GM12878 (cell line): ENCODE measurements at regions of chr6 and their contacts with region 1.

Region 1: GRCh38 chr6:89371849-89372505 is 19.5 kb upstream of the UBE2J1 start:
- DNase-seq: no peak
- ATAC-seq: peak; percentile 89
- H3K4me3 ChIP-seq: no peak overlapping the region
- H3K27ac ChIP-seq: peak overlapping the region; percentile 52
- H3K4me1 ChIP-seq: peaks cover 28% of the 10 kb centered on the region
- H3K27me3 ChIP-seq: no peaks in the 10 kb centered on the region
- CTCF ChIP-seq: peak; percentile 97 to 99 (median 99)
- EP300 ChIP-seq: no peak
- POLR2A ChIP-seq: no peak
- RAD21 ChIP-seq: peak; percentile 85

Region 2: GRCh38 chr6:89080542-89081422 is 291.2 kb before region 1 on chr6 and contains the start of gene PNRC1:
- CTCF ChIA-PET with region 1: interaction called, 10 read pairs
- POLR2A ChIA-PET with region 1: interaction called, 4 read pairs
- RAD21 ChIA-PET with region 1: no interaction called
- SMC1A ChIA-PET with region 1: interaction called, 7 read pairs
- in situ Hi-C with region 1: no loop called
- intact Hi-C with region 1: no loop called
- DNase-seq: peak; percentile 96
- ATAC-seq: peak; percentile 85
- H3K4me3 ChIP-seq: peak within 1 kb of the TSS; percentile 93
- H3K27ac ChIP-seq: peak within 1 kb of the TSS; percentile 99
- H3K4me1 ChIP-seq: no peaks in the 10 kb centered on the region
- H3K27me3 ChIP-seq: no peaks in the 10 kb centered on the region
- CTCF ChIP-seq: no peak
- EP300 ChIP-seq: no peak; a peak in 1 of 4 replicates
- POLR2A ChIP-seq: peak; percentile 100
- RAD21 ChIP-seq: no peak
- polyA plus RNA-seq, gene PNRC1: 7.6 to 9.5 TPM

Region 3: DNA sequence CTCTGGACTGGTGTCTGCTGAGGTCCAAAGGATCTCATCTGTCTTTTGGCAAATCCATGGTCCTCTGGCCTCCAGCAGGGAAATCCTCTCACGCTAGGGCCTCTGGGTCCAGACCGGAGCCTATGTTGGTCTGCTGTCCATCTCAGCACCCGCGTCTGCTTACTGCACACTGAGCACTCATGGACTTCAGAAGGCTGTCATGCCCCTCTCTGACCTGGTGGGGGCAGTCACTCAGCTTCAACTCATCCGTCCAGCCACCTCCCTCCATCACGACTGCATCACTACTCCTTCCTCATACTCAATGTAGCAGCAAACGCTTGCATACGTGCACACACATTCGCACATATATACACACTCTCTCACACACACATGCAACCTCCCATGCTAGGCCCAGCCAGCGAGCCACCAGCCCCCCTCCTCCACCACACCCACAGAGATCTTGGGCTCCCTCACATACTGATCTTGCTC is 90.2 kb before region 1 on chr6:
- CTCF ChIA-PET with region 1: interaction called, 29 read pairs
- POLR2A ChIA-PET with region 1: no interaction called
- RAD21 ChIA-PET with region 1: interaction called, 8 read pairs
- SMC1A ChIA-PET with region 1: interaction called, 15 read pairs
- in situ Hi-C with region 1: no loop called
- intact Hi-C with region 1: loop called (anchors 1 kb)
- DNase-seq: no peak
- ATAC-seq: peak; percentile 99
- H3K4me3 ChIP-seq: no peak overlapping the region
- H3K27ac ChIP-seq: no peak overlapping the region
- H3K4me1 ChIP-seq: peaks cover 7% of the 10 kb centered on the region
- H3K27me3 ChIP-seq: no peaks in the 10 kb centered on the region
- CTCF ChIP-seq: peak; percentile 60 to 86 (median 79)
- EP300 ChIP-seq: no peak
- POLR2A ChIP-seq: no peak
- RAD21 ChIP-seq: peak; percentile 77

Region 4: DNA sequence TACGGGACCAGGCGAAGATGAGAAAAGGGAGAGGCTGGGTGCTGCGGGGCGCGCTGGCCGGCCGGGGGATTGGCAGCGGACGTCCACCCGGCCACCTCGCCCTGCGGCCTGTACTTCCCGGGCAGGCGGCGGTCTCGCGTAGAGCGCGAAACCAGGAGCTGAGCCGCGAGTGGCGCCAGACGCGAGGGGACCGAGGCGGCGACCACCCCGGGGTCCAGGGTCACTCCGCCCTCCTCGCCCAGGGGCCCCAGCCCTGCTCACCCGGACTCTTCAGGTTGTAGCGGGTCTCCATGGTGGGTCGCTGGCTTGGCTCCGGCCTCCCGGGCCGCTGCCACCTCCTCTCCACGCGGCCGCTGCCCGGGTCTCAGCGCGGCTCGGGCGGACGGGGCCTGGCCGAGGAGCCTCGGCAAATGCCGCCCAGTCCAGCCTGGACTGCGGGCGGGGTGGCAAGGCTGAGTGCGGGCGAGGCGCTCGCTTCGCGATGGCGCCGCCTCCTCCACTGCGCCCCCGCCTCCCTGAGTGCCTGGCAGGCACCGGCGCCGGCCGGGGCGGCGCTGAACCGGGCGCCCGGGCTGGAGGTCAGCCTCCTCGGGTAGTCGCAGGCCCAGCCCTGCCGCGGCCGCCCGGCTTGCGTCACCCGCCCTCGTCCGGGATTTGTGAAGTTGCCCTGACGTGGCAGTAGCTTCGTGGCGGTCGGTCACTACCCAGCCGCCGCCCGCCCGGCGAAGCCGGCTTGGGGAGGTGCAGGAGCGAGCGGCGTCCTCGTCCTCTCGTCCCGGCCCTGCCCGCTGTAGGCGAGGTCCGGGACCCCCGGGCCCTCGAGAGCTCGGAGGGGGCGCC is 19.5 kb before region 1 on chr6 and contains the start of gene UBE2J1:
- CTCF ChIA-PET with region 1: interaction called, 260 read pairs
- POLR2A ChIA-PET with region 1: interaction called, 30 read pairs
- RAD21 ChIA-PET with region 1: interaction called, 187 read pairs
- SMC1A ChIA-PET with region 1: interaction called, 252 read pairs
- in situ Hi-C with region 1: no loop called
- intact Hi-C with region 1: no loop called
- DNase-seq: no peak
- ATAC-seq: peak; percentile 79
- H3K4me3 ChIP-seq: peak within 1 kb of the TSS; percentile 98
- H3K27ac ChIP-seq: peak within 1 kb of the TSS; percentile 97
- H3K4me1 ChIP-seq: peaks cover 50% of the 10 kb centered on the region
- H3K27me3 ChIP-seq: no peaks in the 10 kb centered on the region
- CTCF ChIP-seq: no peak
- EP300 ChIP-seq: peak in 1 of 2 experiments; percentile 23; a peak in 1 of 4 replicates
- POLR2A ChIP-seq: peak; percentile 95
- RAD21 ChIP-seq: no peak
- polyA plus RNA-seq, gene UBE2J1: 48.7 to 69.1 TPM

Region 5: DNA sequence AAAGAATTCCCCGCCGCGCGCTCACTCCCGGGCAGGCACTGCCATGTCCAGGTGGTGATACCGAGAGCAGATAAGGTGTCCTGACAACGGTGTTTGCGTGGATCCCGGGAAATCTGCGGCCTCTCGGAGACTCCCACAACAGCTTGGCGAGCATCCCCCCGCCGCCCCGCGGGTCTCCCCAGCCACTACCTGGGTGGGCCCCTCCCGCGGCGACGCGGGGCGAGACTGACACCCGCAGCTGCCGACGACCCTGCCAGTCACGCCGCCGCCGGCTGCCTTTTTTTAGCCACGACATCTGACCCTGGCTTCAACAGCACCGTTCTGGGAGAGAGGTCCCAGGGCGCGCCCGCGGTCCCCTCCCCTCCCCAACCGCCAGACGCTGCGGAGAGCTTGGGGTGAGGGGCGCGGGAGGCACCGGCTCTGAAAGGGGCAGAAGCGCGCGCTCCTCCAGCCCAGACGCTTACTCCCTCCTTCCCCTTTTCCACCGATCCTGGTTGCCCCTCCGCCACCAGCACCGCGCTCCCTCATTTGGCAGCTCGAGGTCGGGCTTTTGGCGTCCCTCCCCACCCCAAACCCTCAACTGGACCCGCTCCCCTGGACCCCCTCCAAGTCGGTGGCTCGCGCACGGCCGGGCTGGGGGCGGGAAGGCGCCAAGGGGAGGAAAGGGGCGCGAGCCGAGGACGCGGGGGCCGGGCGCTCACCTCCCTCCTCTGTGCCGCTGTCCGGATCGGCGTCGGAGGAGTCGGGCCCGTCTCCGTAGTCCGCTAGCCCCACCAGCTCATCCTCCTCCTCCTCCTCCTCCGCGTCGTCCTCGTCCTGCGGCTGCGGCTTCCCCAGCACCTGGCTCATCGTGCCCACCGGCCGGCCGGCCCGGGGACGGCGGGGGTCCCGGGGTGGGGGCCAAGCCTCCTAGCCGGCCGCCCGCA is 39.4 kb after region 1 on chr6:
- CTCF ChIA-PET with region 1: interaction called, 20 read pairs
- POLR2A ChIA-PET with region 1: no interaction called
- RAD21 ChIA-PET with region 1: interaction called, 7 read pairs
- SMC1A ChIA-PET with region 1: interaction called, 10 read pairs
- in situ Hi-C with region 1: no loop called
- intact Hi-C with region 1: loop called (anchors 2 kb)
- DNase-seq: no peak
- ATAC-seq: peak; percentile 75
- H3K4me3 ChIP-seq: peak overlapping the region; percentile 82
- H3K27ac ChIP-seq: peak overlapping the region; percentile 54
- H3K4me1 ChIP-seq: peaks cover 3% of the 10 kb centered on the region; the same call in 1 of the 2 replicates
- H3K27me3 ChIP-seq: no peaks in the 10 kb centered on the region; a peak in 1 of 4 replicates
- CTCF ChIP-seq: no peak
- EP300 ChIP-seq: no peak
- POLR2A ChIP-seq: 0 out of 2 replicates have a peak, but pooled peaks have one; percentile 40
- RAD21 ChIP-seq: no peak

Region 6: GRCh38 chr6:89462503-89462902 is 90.5 kb after region 1 on chr6:
- CTCF ChIA-PET with region 1: no interaction called
- POLR2A ChIA-PET with region 1: no interaction called
- RAD21 ChIA-PET with region 1: no interaction called
- SMC1A ChIA-PET with region 1: no interaction called
- in situ Hi-C with region 1: no loop called
- intact Hi-C with region 1: no loop called
- DNase-seq: no peak
- ATAC-seq: no peak
- H3K4me3 ChIP-seq: no peak overlapping the region
- H3K27ac ChIP-seq: no peak overlapping the region
- H3K4me1 ChIP-seq: no peaks in the 10 kb centered on the region
- H3K27me3 ChIP-seq: no peaks in the 10 kb centered on the region
- CTCF ChIP-seq: no peak
- EP300 ChIP-seq: no peak
- POLR2A ChIP-seq: no peak
- RAD21 ChIP-seq: no peak

Region 7: GRCh38 chr6:89542081-89542857 is 170.3 kb after region 1 on chr6:
- CTCF ChIA-PET with region 1: no interaction called
- POLR2A ChIA-PET with region 1: no interaction called
- RAD21 ChIA-PET with region 1: no interaction called
- SMC1A ChIA-PET with region 1: no interaction called
- in situ Hi-C with region 1: no loop called
- intact Hi-C with region 1: no loop called
- DNase-seq: no peak
- ATAC-seq: peak; percentile 76
- H3K4me3 ChIP-seq: no peak overlapping the region
- H3K27ac ChIP-seq: no peak overlapping the region
- H3K4me1 ChIP-seq: no peaks in the 10 kb centered on the region
- H3K27me3 ChIP-seq: no peaks in the 10 kb centered on the region
- CTCF ChIP-seq: no peak
- EP300 ChIP-seq: no peak
- POLR2A ChIP-seq: no peak
- RAD21 ChIP-seq: no peak

Region 8: GRCh38 chr6:89597988-89598692 is 226.2 kb after region 1 on chr6:
- CTCF ChIA-PET with region 1: interaction called, 24 read pairs
- POLR2A ChIA-PET with region 1: no interaction called
- RAD21 ChIA-PET with region 1: interaction called, 6 read pairs
- SMC1A ChIA-PET with region 1: interaction called, 5 read pairs
- in situ Hi-C with region 1: no loop called
- intact Hi-C with region 1: loop called (anchors 5 kb)
- DNase-seq: no peak
- ATAC-seq: peak; percentile 20; the same call in 1 of the 3 replicates
- H3K4me3 ChIP-seq: no peak overlapping the region
- H3K27ac ChIP-seq: no peak overlapping the region
- H3K4me1 ChIP-seq: peaks cover 17% of the 10 kb centered on the region
- H3K27me3 ChIP-seq: no peaks in the 10 kb centered on the region
- CTCF ChIP-seq: peak; percentile 12 to 34 (median 14); a peak in 3 of 6 replicates
- EP300 ChIP-seq: no peak
- POLR2A ChIP-seq: no peak
- RAD21 ChIP-seq: peak; percentile 44

Region 9: GRCh38 chr6:90478789-90479602 is 1107.0 kb after region 1 on chr6:
- CTCF ChIA-PET with region 1: interaction called, 6 read pairs
- POLR2A ChIA-PET with region 1: no interaction called
- RAD21 ChIA-PET with region 1: interaction called, 4 read pairs
- SMC1A ChIA-PET with region 1: interaction called, 3 read pairs
- in situ Hi-C with region 1: no loop called
- intact Hi-C with region 1: loop called (anchors 10 kb)
- DNase-seq: peak; percentile 41
- ATAC-seq: peak; percentile 96
- H3K4me3 ChIP-seq: 0 out of 2 replicates have a peak overlapping the region, but pooled peaks have one; percentile 15
- H3K27ac ChIP-seq: no peak overlapping the region
- H3K4me1 ChIP-seq: peaks cover 4% of the 10 kb centered on the region
- H3K27me3 ChIP-seq: peaks cover 0 to 4% of the 10 kb centered on the region in 2 experiments; a peak in 1 of 4 replicates
- CTCF ChIP-seq: peak; percentile 72 to 95 (median 80); a peak in 5 of 6 replicates
- EP300 ChIP-seq: no peak
- POLR2A ChIP-seq: no peak
- RAD21 ChIP-seq: peak; percentile 99